ENCODE measurements at regions of chr14 and their contacts with region 1.

Region 1: DNA sequence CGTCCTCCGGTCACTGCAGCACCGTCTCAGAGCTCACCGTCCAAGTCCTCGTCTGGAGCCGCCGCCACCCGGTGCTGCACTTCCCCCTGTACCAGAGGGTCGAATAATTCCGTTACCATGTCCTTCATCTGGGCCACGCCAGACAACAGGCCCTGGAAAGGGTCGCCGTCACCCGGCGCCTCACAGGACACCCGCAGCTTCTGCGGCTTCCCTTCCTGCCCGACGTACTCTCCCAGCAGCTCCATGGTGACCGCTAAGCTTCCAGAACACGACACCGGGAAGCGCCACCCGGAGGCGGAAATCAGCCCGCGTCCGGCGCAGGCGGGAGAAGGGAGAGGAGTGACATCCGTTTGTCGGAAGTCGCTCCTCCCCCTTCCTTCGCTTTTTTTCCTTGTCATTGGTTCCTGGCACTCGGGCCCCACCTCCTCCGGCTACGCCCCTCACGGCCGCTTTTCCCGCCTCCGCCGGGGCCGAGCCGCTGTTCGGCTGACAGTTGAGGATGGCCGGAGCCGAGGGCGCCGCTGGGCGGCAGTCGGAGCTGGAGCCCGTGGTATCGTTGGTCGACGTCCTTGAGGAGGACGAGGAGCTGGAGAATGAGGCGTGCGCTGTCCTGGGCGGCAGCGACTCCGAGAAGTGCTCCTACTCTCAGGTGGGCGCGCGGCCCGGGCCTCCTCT is at the starts of genes GON7 and UBR7:
- DNase-seq: peak; percentile 94
- H3K4me3 Mint-ChIP-seq: peak within 1 kb of the TSS; percentile 99
- H3K27ac Mint-ChIP-seq: peak within 1 kb of the TSS; percentile 94
- H3K4me1 Mint-ChIP-seq: peaks cover 32% of the 10 kb centered on the region
- H3K27me3 Mint-ChIP-seq: no peaks in the 10 kb centered on the region
- total RNA-seq, gene GON7: 12.4 to 12.5 TPM
- total RNA-seq, gene UBR7: 48.0 to 51.6 TPM

Region 2: DNA sequence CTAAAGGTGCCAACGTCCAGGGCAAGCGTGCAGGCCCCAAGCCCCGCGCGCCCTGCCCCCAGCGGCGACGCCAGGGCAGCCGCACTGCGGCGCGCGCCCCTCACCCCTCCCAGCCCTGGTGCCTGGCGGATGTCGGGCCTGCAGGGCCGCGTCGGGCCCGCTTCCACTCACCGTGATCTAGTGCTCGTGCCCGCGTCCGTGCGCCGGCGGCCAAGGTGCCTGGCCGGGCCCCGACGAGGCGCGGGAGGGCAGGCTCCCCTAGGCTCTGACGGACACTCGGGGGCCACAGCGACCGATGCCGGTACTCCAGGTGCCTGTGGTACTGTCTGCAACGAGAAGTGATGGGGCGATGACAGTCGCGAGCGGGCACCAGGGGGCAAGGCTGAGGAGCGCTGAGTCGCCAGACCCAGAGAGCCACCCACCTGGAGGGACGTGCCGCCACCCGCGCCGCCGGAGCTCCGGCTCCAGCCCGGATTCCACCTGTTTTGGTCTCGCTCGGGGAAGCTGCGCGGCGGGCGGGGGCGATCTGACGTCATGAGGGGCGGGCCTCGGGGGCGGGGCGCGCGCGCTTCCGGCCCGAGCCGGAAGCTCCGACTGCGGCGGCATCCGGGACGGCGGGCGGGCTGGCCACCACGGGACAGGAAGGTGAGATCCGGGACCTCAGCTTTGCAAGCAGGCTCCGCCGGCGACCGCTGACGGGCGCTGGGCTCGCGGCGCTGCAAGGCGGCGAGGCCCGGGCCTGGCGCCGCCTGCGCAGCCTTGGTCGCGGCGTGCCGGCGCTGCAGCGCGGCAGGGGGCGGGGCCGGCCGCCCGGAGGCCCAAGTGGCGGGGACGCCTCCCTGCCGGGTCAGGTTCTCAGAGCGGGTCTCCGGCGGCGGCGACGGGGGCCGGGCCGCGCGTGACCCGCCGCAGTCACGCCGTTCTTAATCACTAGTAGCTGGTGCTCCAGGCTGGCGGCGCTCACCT is 22.3 kb before region 1 on chr14 and contains the starts of genes LYSET and MOAP1:
- CTCF ChIA-PET with region 1: interaction called, 28 read pairs
- POLR2A ChIA-PET with region 1: interaction called, 34 read pairs
- intact Hi-C with region 1: loop called (anchors 1 kb)
- DNase-seq: peak; percentile 94
- H3K4me3 Mint-ChIP-seq: peak within 1 kb of the TSS; percentile 93
- H3K27ac Mint-ChIP-seq: peak within 1 kb of the TSS; percentile 92
- H3K4me1 Mint-ChIP-seq: peaks cover 47% of the 10 kb centered on the region
- H3K27me3 Mint-ChIP-seq: no peaks in the 10 kb centered on the region
- total RNA-seq, gene LYSET: 12.0 to 12.4 TPM
- total RNA-seq, gene MOAP1: 14.2 to 14.8 TPM

Region 3: GRCh38 chr14:93332853-93333630 is 126.1 kb after region 1 on chr14 and contains the start of gene BTBD7:
- CTCF ChIA-PET with region 1: interaction called, 6 read pairs
- POLR2A ChIA-PET with region 1: no interaction called
- intact Hi-C with region 1: loop called (anchors 2 kb)
- DNase-seq: peak; percentile 96
- H3K4me3 Mint-ChIP-seq: peak within 1 kb of the TSS; percentile 83
- H3K27ac Mint-ChIP-seq: peak within 1 kb of the TSS; percentile 83
- H3K4me1 Mint-ChIP-seq: peaks cover 43% of the 10 kb centered on the region
- H3K27me3 Mint-ChIP-seq: no peaks in the 10 kb centered on the region
- total RNA-seq, gene BTBD7: 7.7 to 9.9 TPM

Measured in activated CD4-positive, alpha-beta memory T cell treated with anti-CD3 and anti-CD28 coated beads for 36 hours (primary cell).